ENCODE measurements at regions of chr5 and their contacts with region 1.

Region 1: DNA sequence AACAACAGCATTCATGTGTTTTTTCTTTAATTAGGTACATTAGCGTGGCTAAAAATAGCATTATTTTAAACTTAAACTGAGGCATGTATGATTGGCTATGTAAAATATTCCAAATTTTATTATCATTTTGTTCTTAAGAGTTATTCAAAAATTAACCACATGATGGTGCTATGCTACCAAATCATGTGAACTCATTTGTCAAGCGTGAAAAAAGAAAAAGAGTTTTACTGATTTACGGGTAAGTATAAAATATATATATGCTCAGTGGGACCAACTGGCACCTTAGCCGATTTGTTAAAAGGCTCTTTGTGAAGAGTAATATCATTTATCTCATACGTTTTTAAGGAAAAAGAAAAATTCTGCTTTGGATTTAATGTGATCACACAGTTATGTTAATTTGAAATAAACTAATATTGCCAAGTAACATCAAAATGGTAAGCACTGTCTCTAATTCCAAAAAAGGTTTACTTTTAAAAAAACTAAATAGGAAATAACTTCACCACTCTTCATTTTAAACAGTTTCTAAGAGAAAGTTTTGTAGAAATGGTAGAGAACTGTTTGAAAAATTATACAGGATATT is 1042.3 kb downstream of the CDH12 start:
- DNase-seq: peak; percentile 5
- H3K4me3 ChIP-seq: no peak overlapping the region
- H3K27ac ChIP-seq: no peak overlapping the region
- H3K4me1 ChIP-seq: peaks cover 11% of the 10 kb centered on the region
- H3K27me3 ChIP-seq: no peaks in the 10 kb centered on the region
- CTCF ChIP-seq: peak; percentile 40 to 54

Region 2: GRCh38 chr5:21739096-21739495 is 71.7 kb before region 1 on chr5:
- CTCF ChIA-PET with region 1: no interaction called
- dilution Hi-C with region 1: no loop called
- in situ Hi-C with region 1: no loop called
- intact Hi-C with region 1: no loop called
- DNase-seq: no peak
- H3K4me3 ChIP-seq: no peak overlapping the region
- H3K27ac ChIP-seq: no peak overlapping the region
- H3K4me1 ChIP-seq: no peaks in the 10 kb centered on the region
- H3K27me3 ChIP-seq: no peaks in the 10 kb centered on the region
- CTCF ChIP-seq: no peak

Region 3: DNA sequence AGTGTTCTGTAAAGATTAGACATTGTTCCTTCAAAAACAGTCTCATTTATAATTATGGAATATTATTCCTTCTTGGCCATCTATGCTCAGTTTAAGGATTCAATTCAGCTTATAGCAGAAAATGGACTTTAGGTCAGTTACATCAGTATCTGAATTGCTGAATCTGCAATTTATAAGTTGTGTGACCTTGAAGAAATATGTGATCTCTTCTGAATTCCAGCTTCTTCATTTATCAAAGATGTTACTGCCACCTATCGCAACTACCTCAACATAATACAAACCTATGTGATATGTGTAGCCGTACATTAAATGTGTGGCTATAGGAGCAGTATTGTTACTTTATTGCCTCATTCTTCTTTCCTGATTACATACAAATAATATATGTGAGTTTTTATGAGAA is 924.1 kb after region 1 on chr5:
- CTCF ChIA-PET with region 1: no interaction called
- dilution Hi-C with region 1: no loop called
- in situ Hi-C with region 1: no loop called
- intact Hi-C with region 1: loop called (anchors 10 kb)
- DNase-seq: no peak
- H3K4me3 ChIP-seq: no peak overlapping the region
- H3K27ac ChIP-seq: no peak overlapping the region
- H3K4me1 ChIP-seq: no peaks in the 10 kb centered on the region
- H3K27me3 ChIP-seq: no peaks in the 10 kb centered on the region
- CTCF ChIP-seq: peak in 1 of 2 donors; percentile 10

Region 4: DNA sequence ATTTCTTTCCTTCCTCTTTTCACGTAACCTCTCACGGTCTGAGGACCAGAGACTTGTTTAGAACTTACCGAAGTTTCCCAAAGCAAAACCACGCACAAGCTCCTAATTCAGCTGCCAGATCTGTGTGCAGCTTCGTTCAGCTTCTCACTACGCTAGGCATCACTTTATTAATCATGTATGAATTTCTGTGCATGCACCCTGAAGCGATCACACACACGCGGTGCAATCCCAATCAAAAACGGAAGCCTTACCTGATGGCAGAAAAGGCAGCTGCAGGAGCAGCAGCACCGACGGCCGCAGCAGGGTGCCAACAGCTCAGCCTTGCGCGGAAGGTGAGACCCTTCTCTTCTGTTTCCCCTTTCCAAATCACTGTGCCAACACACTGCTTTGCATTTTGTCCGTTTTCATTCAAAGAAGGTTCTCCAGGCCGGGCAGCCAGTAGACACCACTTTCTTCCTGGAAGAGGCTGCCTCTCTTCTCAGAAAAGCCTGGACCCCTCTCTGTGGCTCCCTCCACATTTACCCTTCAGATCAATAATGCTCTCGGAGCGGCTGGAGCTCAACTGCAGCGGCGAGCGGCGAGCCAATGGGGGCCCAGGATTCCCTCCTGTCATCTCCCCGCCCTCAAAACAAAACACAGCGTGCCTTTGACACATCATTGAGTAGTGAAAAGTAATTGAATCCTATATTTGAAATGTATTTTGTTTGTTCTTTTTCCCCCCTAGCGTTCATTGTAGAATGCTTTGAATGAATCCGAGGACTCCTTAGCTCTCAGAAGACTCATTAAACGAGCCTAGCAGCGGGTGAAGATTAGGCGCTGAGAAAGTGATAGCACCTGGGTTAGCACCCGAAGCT is 1042.2 kb after region 1 on chr5 and contains the start of gene CDH12:
- CTCF ChIA-PET with region 1: no interaction called
- dilution Hi-C with region 1: no loop called
- in situ Hi-C with region 1: no loop called
- intact Hi-C with region 1: no loop called
- DNase-seq: peak; percentile 16
- H3K4me3 ChIP-seq: peak within 1 kb of the TSS; percentile 30 to 37 (median 37)
- H3K27ac ChIP-seq: no peak within 1 kb of the TSS
- H3K4me1 ChIP-seq: peaks cover 8% of the 10 kb centered on the region
- H3K27me3 ChIP-seq: peaks cover 3% of the 10 kb centered on the region
- CTCF ChIP-seq: no peak
- total RNA-seq, gene CDH12: not detected

Measured in mammary epithelial cell (primary cell).